ENCODE measurements at regions of chr9 and their contacts with region 1.

Region 1: GRCh38 chr9:73269430-73270101 is 117.9 kb downstream of the ANXA1 start:
- H3K4me3 Mint-ChIP-seq: no peak overlapping the region
- H3K27ac Mint-ChIP-seq: no peak overlapping the region
- H3K4me1 Mint-ChIP-seq: peaks cover 19% of the 10 kb centered on the region
- H3K27me3 Mint-ChIP-seq: no peaks in the 10 kb centered on the region

Region 2: DNA sequence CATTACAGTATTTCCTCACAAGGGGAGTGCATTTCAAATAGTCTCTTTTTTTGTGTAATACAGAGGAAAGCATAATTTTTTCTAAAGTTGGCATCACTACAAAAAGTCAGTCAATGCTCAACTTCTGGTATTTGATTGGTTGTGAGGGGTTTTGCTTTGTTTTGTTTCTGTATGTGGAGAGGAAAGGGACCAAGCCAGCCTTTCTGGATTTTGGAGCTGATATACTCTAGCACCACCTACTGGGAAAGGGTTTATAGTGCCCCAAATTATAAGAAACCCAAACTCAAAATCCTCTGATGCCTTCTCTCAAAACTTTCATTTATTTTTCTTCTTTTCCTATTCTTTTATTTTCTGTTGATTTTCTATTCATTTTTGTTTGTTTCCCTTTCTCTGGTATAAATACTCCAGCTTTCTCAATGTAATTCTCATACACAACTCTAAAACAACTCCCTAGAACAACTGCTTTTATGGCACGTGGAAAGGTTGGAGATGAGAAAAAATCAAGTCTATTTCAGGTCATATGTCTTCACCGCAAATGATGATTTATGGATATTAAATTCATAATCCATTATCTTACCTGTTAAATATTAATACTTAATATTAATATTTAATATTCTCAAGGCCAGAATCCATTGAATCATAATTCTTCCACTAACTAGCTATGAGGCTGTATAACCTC is 187.4 kb before region 1 on chr9:
- intact Hi-C with region 1: no loop called
- H3K4me3 Mint-ChIP-seq: no peak overlapping the region
- H3K27ac Mint-ChIP-seq: no peak overlapping the region
- H3K4me1 Mint-ChIP-seq: no peaks in the 10 kb centered on the region
- H3K27me3 Mint-ChIP-seq: no peaks in the 10 kb centered on the region

Region 3: DNA sequence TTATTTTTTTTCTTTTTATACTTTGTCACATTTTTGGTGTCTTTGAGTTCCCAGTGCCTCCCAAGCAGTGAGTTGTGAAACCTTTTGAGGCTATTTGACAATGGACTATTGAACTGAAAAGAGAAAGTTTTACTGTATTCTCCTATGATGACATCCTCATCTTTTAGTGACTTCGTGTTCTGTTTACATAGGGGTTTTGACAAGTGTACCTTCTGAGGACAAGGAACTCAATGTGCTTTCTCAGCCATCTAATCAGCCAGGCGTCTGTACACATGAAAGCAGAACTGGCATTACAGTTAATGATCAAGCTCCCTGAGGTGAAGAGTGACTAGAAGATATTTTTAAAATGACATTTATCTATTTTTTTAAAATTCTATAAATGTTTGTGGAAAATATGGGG is 57.6 kb after region 1 on chr9:
- intact Hi-C with region 1: loop called (anchors 10 kb)
- H3K4me3 Mint-ChIP-seq: no peak overlapping the region
- H3K27ac Mint-ChIP-seq: no peak overlapping the region
- H3K4me1 Mint-ChIP-seq: no peaks in the 10 kb centered on the region
- H3K27me3 Mint-ChIP-seq: no peaks in the 10 kb centered on the region